H1 (cell line): ENCODE measurements at regions of chr2 and their contacts with region 1.

Region 1: GRCh38 chr2:216034065-216034464 is 20.7 kb upstream of the MREG start:
- DNase-seq: peak; percentile 56 to 97
- H3K4me3 ChIP-seq: no peak overlapping the region
- H3K27ac ChIP-seq: no peak overlapping the region
- H3K4me1 ChIP-seq: peaks cover 0 to 3% (median 0%) of the 10 kb centered on the region in 4 experiments; a peak in 1 of 7 replicates
- H3K27me3 ChIP-seq: no peaks in the 10 kb centered on the region
- CTCF ChIP-seq: peak; percentile 70 to 90 (median 71)
- EP300 ChIP-seq: no peak
- POLR2A ChIP-seq: no peak
- RAD21 ChIP-seq: peak; percentile 57 to 64

Region 2: GRCh38 chr2:216044883-216045486 is 10.9 kb after region 1 on chr2:
- CTCF ChIA-PET with region 1: interaction called, 33 read pairs
- POLR2A ChIA-PET with region 1: interaction called, 4 read pairs
- DNase-seq: no peak
- H3K4me3 ChIP-seq: no peak overlapping the region
- H3K27ac ChIP-seq: no peak overlapping the region
- H3K4me1 ChIP-seq: no peaks in the 10 kb centered on the region
- H3K27me3 ChIP-seq: no peaks in the 10 kb centered on the region
- CTCF ChIP-seq: no peak
- EP300 ChIP-seq: no peak
- POLR2A ChIP-seq: no peak
- RAD21 ChIP-seq: no peak

Region 3: DNA sequence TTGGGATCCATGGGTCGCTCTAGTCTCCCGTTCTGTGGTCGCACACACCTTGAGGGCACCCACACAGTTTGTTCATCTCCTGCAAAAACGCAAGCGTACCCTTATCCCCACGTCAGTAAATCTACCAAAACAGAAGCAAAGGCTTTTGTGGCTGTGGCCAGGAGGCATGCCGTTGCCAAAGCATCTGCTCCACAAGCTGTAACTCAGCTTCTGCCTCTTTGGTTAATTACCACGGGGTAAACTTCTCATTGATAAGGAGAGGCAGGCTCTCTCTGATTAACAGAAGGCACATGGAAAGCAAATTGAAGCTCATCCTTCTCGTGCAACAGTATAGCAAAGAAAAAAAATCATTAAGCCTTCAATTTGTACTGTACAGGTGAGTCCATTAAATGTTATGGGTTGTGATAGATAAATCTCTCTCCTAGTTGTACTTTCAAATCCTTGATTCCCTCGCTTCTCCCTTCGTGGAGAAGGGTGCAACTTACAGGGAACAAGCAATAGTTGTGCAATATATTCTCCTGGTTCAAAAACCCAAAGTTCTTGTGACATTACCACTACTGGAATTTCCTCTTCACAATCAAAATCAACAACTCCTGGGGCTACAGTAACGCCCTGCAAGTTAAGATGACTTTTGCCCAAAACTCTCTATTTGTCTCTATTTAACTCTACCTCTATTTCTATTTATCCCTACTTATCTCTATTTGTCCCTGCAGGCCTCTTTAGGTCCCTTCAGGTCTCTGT is 37.2 kb after region 1 on chr2:
- CTCF ChIA-PET with region 1: interaction called, 18 read pairs
- POLR2A ChIA-PET with region 1: interaction called, 3 read pairs
- DNase-seq: no peak
- H3K4me3 ChIP-seq: no peak overlapping the region
- H3K27ac ChIP-seq: no peak overlapping the region
- H3K4me1 ChIP-seq: peaks cover 0 to 3% (median under 1%) of the 10 kb centered on the region in 4 experiments; a peak in 1 of 7 replicates
- H3K27me3 ChIP-seq: no peaks in the 10 kb centered on the region
- CTCF ChIP-seq: no peak
- EP300 ChIP-seq: no peak
- POLR2A ChIP-seq: no peak
- RAD21 ChIP-seq: no peak

Region 4: GRCh38 chr2:216101109-216101508 is 67.0 kb after region 1 on chr2:
- CTCF ChIA-PET with region 1: interaction called, 15 read pairs
- POLR2A ChIA-PET with region 1: no interaction called
- DNase-seq: no peak
- H3K4me3 ChIP-seq: no peak overlapping the region
- H3K27ac ChIP-seq: no peak overlapping the region
- H3K4me1 ChIP-seq: no peaks in the 10 kb centered on the region
- H3K27me3 ChIP-seq: no peaks in the 10 kb centered on the region
- CTCF ChIP-seq: no peak
- EP300 ChIP-seq: no peak
- POLR2A ChIP-seq: no peak
- RAD21 ChIP-seq: no peak